T-cell (primary cell): ENCODE measurements at regions of chr11 and their contacts with region 1.

Region 1: DNA sequence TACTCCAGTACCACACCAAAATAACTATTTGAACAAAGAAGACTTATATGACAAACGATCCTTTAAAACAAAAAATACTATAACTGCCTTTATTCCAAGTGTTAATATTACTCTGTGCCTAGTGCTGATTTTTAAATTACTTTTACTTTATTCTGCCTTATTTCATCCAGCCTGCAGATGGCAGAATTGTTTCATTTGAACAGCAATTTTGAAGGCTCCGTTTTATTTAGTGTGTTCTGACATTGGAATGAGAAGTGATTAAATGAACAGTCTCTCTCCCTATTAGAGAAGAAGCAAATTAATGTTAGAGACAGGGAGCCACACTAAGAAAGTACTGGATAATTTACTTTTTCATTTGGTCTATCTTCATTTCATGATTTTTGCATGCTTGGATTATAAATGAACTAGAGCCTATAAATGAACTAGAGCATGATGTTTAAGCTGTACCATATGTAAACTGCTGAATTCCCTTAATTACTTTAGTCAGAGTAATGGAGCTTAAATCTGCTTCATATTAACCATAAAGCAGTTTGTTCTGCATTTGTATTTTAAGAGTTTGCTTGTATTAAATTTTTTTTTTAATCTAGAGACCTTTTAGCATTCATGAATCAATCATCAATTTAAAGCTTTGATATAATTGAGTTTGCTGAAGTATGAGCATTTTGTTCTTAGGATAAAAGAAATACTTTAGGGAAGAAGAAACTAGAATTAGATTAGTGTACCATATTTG is 9.8 kb downstream of the PDHX start:
- DNase-seq: peak in 6 of 35 experiments; percentile 4 to 77 (median 14)
- ATAC-seq: peak; percentile 43 to 51 (median 48)
- H3K4me3 ChIP-seq: no peak overlapping the region
- H3K4me3 Mint-ChIP-seq: no peak overlapping the region
- H3K27ac ChIP-seq: no peak overlapping the region
- H3K27ac Mint-ChIP-seq: no peak overlapping the region
- H3K4me1 ChIP-seq: peaks cover 0 to 2% of the 10 kb centered on the region in 2 experiments
- H3K4me1 Mint-ChIP-seq: peaks cover 21 to 40% (median 25%) of the 10 kb centered on the region in 3 donors
- H3K27me3 ChIP-seq: no peaks in the 10 kb centered on the region
- H3K27me3 Mint-ChIP-seq: no peaks in the 10 kb centered on the region

Region 2: DNA sequence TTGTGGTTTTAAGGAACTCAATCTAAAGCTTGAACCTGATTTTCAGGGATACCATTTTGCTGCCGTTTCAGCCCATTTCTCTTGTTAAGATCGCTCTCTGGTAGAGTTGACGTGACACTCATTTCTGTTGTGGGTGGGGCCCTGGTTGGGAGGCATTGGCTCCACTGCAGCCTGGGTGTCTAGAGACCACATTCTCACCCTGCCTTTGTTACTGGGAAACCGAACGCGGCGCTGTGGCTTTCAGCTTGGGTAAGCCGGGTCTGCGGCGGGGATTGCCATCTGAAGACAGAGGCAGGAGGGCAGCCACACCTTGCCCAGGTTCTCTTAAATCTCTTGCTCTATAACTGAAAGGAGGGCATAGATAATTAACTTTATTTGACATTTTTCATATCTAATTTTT is 302.2 kb before region 1 on chr11:
- CTCF ChIA-PET with region 1: no interaction called
- POLR2A ChIA-PET with region 1: no interaction called
- DNase-seq: peak in 30 of 35 experiments; percentile 5 to 60 (median 20)
- ATAC-seq: peak in 3 of 4 experiments; percentile 34 to 63 (median 47)
- H3K4me3 ChIP-seq: no peak overlapping the region
- H3K4me3 Mint-ChIP-seq: peak overlapping the region in 1 of 3 donors; percentile 35
- H3K27ac ChIP-seq: no peak overlapping the region
- H3K27ac Mint-ChIP-seq: peak overlapping the region in 1 of 2 donors; percentile 28
- H3K4me1 ChIP-seq: peaks cover 0 to 9% of the 10 kb centered on the region in 2 experiments
- H3K4me1 Mint-ChIP-seq: peaks cover 0 to 4% (median 0%) of the 10 kb centered on the region in 3 donors
- H3K27me3 ChIP-seq: peaks cover 0 to 14% of the 10 kb centered on the region in 2 experiments
- H3K27me3 Mint-ChIP-seq: peaks cover 24 to 25% of the 10 kb centered on the region in 2 donors

Region 3: GRCh38 chr11:34972892-34973291 is 46.6 kb after region 1 on chr11:
- CTCF ChIA-PET with region 1: interaction called in 1 of 2 experiments, 14 read pairs
- POLR2A ChIA-PET with region 1: interaction called in 1 of 2 experiments, 3 read pairs
- DNase-seq: no peak
- ATAC-seq: no peak
- H3K4me3 ChIP-seq: no peak overlapping the region
- H3K4me3 Mint-ChIP-seq: no peak overlapping the region
- H3K27ac ChIP-seq: no peak overlapping the region
- H3K27ac Mint-ChIP-seq: no peak overlapping the region
- H3K4me1 ChIP-seq: peaks cover 0 to 4% of the 10 kb centered on the region in 2 experiments
- H3K4me1 Mint-ChIP-seq: peaks cover 15 to 34% (median 23%) of the 10 kb centered on the region in 3 donors
- H3K27me3 ChIP-seq: no peaks in the 10 kb centered on the region
- H3K27me3 Mint-ChIP-seq: no peaks in the 10 kb centered on the region

Region 4: GRCh38 chr11:35305670-35306382 is 379.6 kb after region 1 on chr11:
- CTCF ChIA-PET with region 1: interaction called, 12 to 13 read pairs
- POLR2A ChIA-PET with region 1: no interaction called
- DNase-seq: peak in 32 of 35 experiments; percentile 6 to 72 (median 26)
- ATAC-seq: peak; percentile 58 to 85 (median 78)
- H3K4me3 ChIP-seq: no peak overlapping the region
- H3K4me3 Mint-ChIP-seq: peak overlapping the region; percentile 5 to 69 (median 68)
- H3K27ac ChIP-seq: no peak overlapping the region
- H3K27ac Mint-ChIP-seq: peak overlapping the region; percentile 80 to 89
- H3K4me1 ChIP-seq: peaks cover 0 to 11% of the 10 kb centered on the region in 2 experiments
- H3K4me1 Mint-ChIP-seq: peaks cover 23 to 34% (median 25%) of the 10 kb centered on the region in 3 donors
- H3K27me3 ChIP-seq: no peaks in the 10 kb centered on the region
- H3K27me3 Mint-ChIP-seq: no peaks in the 10 kb centered on the region

Region 5: DNA sequence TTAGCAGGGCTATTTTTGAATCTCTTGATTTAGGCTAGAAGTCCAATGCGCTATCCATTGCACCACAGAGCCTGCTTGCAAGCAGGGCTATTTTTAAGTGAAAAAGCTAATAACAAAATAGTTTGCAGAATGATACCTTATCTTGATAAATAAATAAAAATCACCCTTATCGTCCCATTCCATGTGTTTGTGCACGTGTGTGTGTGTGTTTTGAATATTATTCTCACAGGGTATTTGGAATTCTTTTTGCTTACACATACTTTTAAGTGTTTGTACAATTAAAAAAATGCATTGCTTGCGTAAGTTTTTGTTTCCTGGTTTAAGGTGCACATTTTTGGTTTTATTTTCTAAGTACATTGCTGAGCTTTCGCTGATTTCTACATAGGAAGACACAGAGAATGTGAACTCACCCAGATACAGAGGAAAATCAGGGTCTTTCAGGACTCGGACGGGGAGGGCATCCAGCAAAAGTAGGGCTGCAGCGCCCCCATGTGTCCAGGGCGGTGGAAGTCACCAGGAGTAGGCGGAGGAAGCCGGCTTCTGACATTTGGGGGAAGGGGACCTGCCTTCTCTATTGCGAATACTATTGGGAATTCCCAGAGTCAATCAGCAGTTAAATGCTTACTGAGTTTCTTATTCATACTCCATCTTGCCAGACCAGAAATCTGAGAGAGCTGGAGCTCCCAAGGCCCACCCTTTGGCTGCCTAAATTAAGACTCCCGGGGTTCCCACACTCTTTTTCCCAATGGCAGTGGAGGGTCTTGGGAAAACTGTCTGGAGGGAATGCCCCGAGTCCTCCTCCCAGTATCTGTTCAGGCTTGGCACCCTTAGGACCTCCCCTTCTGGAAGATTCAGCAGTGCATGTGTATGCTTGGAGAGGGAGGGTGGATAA is 465.9 kb after region 1 on chr11:
- CTCF ChIA-PET with region 1: interaction called, 46 to 82 read pairs
- POLR2A ChIA-PET with region 1: interaction called in 1 of 2 experiments, 4 read pairs
- DNase-seq: peak; percentile 53 to 92 (median 82)
- ATAC-seq: peak; percentile 75 to 96 (median 86)
- H3K4me3 ChIP-seq: no peak overlapping the region
- H3K4me3 Mint-ChIP-seq: peak overlapping the region; percentile 48 to 60 (median 57)
- H3K27ac ChIP-seq: no peak overlapping the region
- H3K27ac Mint-ChIP-seq: peak overlapping the region in 1 of 2 donors; percentile 28
- H3K4me1 ChIP-seq: peaks cover 0 to 5% of the 10 kb centered on the region in 2 experiments
- H3K4me1 Mint-ChIP-seq: peaks cover 24 to 27% (median 25%) of the 10 kb centered on the region in 3 donors
- H3K27me3 ChIP-seq: peaks cover 0 to 4% of the 10 kb centered on the region in 2 experiments
- H3K27me3 Mint-ChIP-seq: peaks cover 0 to 2% of the 10 kb centered on the region in 2 donors

Region 6: GRCh38 chr11:35485656-35486322 is 559.5 kb after region 1 on chr11:
- CTCF ChIA-PET with region 1: interaction called, 17 read pairs
- POLR2A ChIA-PET with region 1: no interaction called
- DNase-seq: peak; percentile 7 to 77 (median 59)
- ATAC-seq: peak; percentile 69 to 78 (median 72)
- H3K4me3 ChIP-seq: no peak overlapping the region
- H3K4me3 Mint-ChIP-seq: no peak overlapping the region
- H3K27ac ChIP-seq: no peak overlapping the region
- H3K27ac Mint-ChIP-seq: no peak overlapping the region
- H3K4me1 ChIP-seq: no peaks in the 10 kb centered on the region
- H3K4me1 Mint-ChIP-seq: no peaks in the 10 kb centered on the region
- H3K27me3 ChIP-seq: peaks cover 0 to 17% of the 10 kb centered on the region in 2 experiments
- H3K27me3 Mint-ChIP-seq: peaks cover 44 to 47% of the 10 kb centered on the region in 2 donors